ENCODE measurements at regions of chr18 and their contacts with region 1.

Region 1: DNA sequence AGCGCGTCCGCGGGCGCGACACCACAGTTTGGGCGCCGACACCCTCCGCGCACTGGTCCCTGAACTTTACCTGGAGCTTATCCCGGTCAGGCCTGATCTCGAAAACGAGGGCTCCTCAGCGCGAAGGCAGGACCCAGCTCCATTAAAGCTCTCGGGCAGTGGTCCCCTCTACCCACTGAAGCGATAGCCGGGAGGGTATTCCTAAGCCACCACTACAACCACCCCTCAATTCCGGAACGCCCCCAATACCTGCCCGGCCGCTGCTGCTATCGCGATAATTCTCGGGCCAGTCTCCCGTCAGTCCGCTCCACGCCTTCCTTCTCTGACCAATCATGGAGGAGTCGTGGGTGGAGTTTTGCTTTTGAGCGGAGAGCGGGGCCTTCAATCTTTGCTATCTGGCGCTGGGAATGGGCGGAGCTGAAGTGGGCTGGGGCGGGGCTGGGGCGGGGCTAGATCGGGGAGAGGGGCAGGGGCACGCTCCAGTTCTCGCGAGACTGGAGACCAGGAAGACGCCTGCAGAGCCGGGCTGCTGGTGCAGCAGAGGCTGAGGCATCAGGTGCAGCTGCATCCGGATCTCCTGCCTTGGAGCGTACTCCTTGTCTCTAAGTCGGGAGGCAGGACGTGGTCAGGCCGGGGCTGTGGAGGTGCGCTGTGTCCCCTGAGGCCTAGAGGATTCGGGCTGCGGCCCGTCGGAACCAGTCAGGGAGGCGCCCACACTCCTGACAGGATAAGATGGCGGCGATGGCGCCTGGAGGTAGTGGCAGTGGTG is at the starts of genes PIGN and RELCH:
- DNase-seq: peak; percentile 90 to 98
- ATAC-seq: peak; percentile 98 to 99 (median 99)
- H3K4me3 ChIP-seq: peak within 1 kb of the TSS; percentile 72 to 100 (median 94)
- H3K27ac ChIP-seq: peak within 1 kb of the TSS; percentile 56 to 91 (median 83)
- H3K4me1 ChIP-seq: peaks cover 0 to 53% (median 31%) of the 10 kb centered on the region in 9 donors
- H3K27me3 ChIP-seq: no peaks in the 10 kb centered on the region
- CTCF ChIP-seq: no peak
- total RNA-seq, gene PIGN: 14.4 to 31.6 (median 21.2) TPM
- total RNA-seq, gene RELCH: 12.1 to 21.0 (median 16.5) TPM

Region 2: DNA sequence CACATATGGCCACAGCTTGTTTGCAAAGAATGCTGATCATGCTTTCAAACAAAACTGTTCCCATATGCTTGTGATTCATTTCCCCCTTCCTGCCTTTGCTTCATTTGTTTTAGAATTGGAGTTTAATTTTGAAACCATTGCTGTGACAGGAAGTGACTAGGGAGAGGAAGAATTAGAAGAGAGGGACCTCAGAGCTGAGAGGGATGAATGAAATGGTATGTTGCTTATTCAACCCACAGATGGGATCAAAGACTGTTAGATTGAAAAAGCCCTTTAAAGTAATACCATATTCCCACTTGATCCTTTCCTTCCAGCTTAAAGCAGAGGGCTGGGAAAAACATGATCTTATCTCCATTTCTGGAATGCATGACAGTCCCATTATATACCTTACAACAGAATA is 188.0 kb before region 1 on chr18:
- intact Hi-C with region 1: no loop called
- DNase-seq: no peak
- ATAC-seq: peak in 1 of 8 donors; percentile 20
- H3K4me3 ChIP-seq: no peak overlapping the region
- H3K27ac ChIP-seq: peak overlapping the region in 1 of 10 donors; percentile 0
- H3K4me1 ChIP-seq: peaks cover 0 to 29% (median 0%) of the 10 kb centered on the region in 9 donors
- H3K27me3 ChIP-seq: no peaks in the 10 kb centered on the region
- CTCF ChIP-seq: no peak

Region 3: DNA sequence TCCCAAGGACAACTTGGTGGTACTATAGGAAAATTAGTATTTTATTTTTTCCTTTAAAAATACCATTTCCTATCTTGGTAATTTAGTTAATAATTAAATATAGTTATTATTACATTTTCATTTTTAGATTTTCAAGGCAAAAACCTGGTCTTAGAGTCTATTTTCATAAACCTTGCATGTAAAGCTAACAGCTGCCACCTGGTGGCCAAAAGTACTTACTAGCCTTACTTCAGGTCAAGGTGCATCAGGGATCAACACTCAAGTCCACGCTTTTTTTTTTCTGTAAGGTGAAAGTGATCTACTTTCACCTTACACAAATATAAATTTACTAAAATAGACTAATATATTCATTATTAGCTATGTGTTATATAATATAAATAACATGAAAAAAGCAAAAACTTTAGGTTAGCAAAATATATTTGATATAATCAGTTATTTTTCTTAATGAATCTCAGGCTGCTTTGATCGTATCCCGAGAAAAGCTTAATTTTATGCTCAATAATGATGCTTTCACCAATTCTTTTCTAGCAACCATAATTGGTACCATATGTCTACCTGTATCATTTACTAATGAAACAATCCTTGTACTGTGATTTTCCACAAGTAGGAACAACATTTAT is 62.6 kb after region 1 on chr18:
- intact Hi-C with region 1: loop called (anchors 1 to 5 kb)
- DNase-seq: peak; percentile 13 to 53
- ATAC-seq: no peak
- H3K4me3 ChIP-seq: no peak overlapping the region
- H3K27ac ChIP-seq: no peak overlapping the region
- H3K4me1 ChIP-seq: no peaks in the 10 kb centered on the region
- H3K27me3 ChIP-seq: no peaks in the 10 kb centered on the region
- CTCF ChIP-seq: peak; percentile 56 to 89 (median 85)

Region 4: GRCh38 chr18:62576845-62577512 is 390.0 kb after region 1 on chr18:
- intact Hi-C with region 1: loop called in 5 of 10 experiments (anchors 5 to 10 kb)
- DNase-seq: no peak
- ATAC-seq: peak in 2 of 8 donors; percentile 22 to 37
- H3K4me3 ChIP-seq: peak overlapping the region in 1 of 10 donors; percentile 3
- H3K27ac ChIP-seq: peak overlapping the region in 1 of 10 donors; percentile 74
- H3K4me1 ChIP-seq: peaks cover 0 to 5% (median 0%) of the 10 kb centered on the region in 9 donors
- H3K27me3 ChIP-seq: no peaks in the 10 kb centered on the region
- CTCF ChIP-seq: no peak

Region 5: DNA sequence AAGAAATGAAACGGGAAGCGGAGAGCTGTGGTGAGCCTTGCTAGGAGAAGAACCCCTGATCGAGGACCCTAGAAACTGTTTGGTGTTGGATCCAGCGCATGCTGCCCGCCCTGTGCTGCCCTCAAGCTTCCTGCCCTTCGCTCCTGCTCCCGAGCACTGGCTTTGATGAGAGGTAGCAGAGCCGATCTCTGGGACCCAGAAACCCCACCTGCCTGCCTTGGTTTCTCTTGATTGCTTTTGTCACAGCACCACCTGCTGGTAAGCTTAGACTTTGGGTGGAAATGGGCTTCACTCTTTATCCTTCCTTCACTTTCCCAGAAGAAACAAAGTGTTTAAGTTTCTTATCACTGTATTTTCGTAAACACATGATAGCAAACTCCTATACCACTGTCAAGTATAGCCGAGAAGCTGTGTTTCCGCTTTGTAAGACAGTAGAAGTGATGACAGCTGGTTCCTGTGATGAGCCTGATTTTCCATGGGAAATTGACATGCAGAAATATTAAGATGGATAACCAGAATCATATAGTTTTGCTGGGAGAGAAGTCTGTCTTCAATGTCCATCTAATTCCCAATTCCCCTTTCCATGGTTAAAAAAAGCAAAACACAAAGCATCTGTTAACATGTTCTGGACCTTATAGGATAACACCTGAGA is 795.8 kb after region 1 on chr18:
- intact Hi-C with region 1: loop called in 3 of 10 experiments (anchors 10 kb)
- DNase-seq: peak in 1 of 2 donors; percentile 61
- ATAC-seq: peak; percentile 63 to 87 (median 72)
- H3K4me3 ChIP-seq: peak overlapping the region in 8 of 10 donors; percentile 6 to 53 (median 42)
- H3K27ac ChIP-seq: no peak overlapping the region
- H3K4me1 ChIP-seq: peaks cover 0 to 20% (median 4%) of the 10 kb centered on the region in 9 donors
- H3K27me3 ChIP-seq: no peaks in the 10 kb centered on the region
- CTCF ChIP-seq: peak; percentile 43 to 88 (median 83)